Esophagus squamous epithelium (tissue), 5 donors: ENCODE measurements at regions of chr9 and their contacts with region 1.

Region 1: GRCh38 chr9:114155263-114155972 is at the start of gene COL27A1:
- DNase-seq: no peak
- H3K4me3 ChIP-seq: peak within 1 kb of the TSS; percentile 40 to 71 (median 65)
- H3K27ac ChIP-seq: peak within 1 kb of the TSS; percentile 52 to 83 (median 74)
- H3K4me1 ChIP-seq: peaks cover 21 to 57% (median 29%) of the 10 kb centered on the region in 3 donors
- H3K27me3 ChIP-seq: peaks cover 0 to 60% (median 6%) of the 10 kb centered on the region in 4 donors
- CTCF ChIP-seq: peak; percentile 87 to 93 (median 89)
- POLR2A ChIP-seq: no peak
- total RNA-seq, gene COL27A1: 7.5 to 34.0 (median 12.0) TPM

Region 2: GRCh38 chr9:114196979-114197622 is 41.7 kb after region 1 on chr9:
- intact Hi-C with region 1: no loop called
- DNase-seq: no peak
- H3K4me3 ChIP-seq: no peak overlapping the region
- H3K27ac ChIP-seq: no peak overlapping the region
- H3K4me1 ChIP-seq: no peaks in the 10 kb centered on the region
- H3K27me3 ChIP-seq: no peaks in the 10 kb centered on the region
- CTCF ChIP-seq: no peak
- POLR2A ChIP-seq: no peak

Region 3: DNA sequence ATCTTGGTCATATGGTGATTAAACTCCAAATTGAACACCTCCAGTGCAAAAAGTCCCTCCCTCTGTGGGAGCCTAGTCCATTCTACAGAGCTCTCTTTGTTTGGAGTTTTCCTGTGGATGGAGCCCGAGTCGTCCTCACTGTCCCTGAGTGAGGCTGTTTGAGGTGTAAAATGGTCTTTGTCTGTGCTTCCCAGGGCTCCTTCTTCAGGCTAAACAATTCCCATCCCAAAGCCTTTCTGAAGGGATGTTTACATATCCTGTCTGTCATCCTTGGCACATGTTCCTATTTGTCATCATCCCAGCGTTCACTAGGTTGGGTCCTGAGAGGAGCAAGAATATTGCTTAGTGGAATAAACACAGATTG is 68.8 kb after region 1 on chr9:
- intact Hi-C with region 1: no loop called
- DNase-seq: no peak
- H3K4me3 ChIP-seq: no peak overlapping the region
- H3K27ac ChIP-seq: no peak overlapping the region
- H3K4me1 ChIP-seq: peaks cover 0 to 13% (median 0%) of the 10 kb centered on the region in 3 donors
- H3K27me3 ChIP-seq: no peaks in the 10 kb centered on the region
- CTCF ChIP-seq: no peak
- POLR2A ChIP-seq: no peak

Region 4: GRCh38 chr9:114285166-114285867 is 129.9 kb after region 1 on chr9:
- intact Hi-C with region 1: loop called (anchors 5 kb)
- DNase-seq: no peak
- H3K4me3 ChIP-seq: no peak overlapping the region
- H3K27ac ChIP-seq: no peak overlapping the region
- H3K4me1 ChIP-seq: peaks cover 0 to 38% (median 4%) of the 10 kb centered on the region in 3 donors
- H3K27me3 ChIP-seq: no peaks in the 10 kb centered on the region
- CTCF ChIP-seq: no peak
- POLR2A ChIP-seq: no peak

Region 5: GRCh38 chr9:114472765-114473446 is 317.5 kb after region 1 on chr9:
- intact Hi-C with region 1: no loop called
- DNase-seq: no peak
- H3K4me3 ChIP-seq: no peak overlapping the region
- H3K27ac ChIP-seq: peak overlapping the region in 3 of 4 donors; percentile 61 to 70 (median 64)
- H3K4me1 ChIP-seq: peaks cover 0 to 23% (median 7%) of the 10 kb centered on the region in 3 donors
- H3K27me3 ChIP-seq: no peaks in the 10 kb centered on the region
- CTCF ChIP-seq: no peak
- POLR2A ChIP-seq: no peak